ENCODE measurements at regions of chr4 and their contacts with region 1.

Region 1: DNA sequence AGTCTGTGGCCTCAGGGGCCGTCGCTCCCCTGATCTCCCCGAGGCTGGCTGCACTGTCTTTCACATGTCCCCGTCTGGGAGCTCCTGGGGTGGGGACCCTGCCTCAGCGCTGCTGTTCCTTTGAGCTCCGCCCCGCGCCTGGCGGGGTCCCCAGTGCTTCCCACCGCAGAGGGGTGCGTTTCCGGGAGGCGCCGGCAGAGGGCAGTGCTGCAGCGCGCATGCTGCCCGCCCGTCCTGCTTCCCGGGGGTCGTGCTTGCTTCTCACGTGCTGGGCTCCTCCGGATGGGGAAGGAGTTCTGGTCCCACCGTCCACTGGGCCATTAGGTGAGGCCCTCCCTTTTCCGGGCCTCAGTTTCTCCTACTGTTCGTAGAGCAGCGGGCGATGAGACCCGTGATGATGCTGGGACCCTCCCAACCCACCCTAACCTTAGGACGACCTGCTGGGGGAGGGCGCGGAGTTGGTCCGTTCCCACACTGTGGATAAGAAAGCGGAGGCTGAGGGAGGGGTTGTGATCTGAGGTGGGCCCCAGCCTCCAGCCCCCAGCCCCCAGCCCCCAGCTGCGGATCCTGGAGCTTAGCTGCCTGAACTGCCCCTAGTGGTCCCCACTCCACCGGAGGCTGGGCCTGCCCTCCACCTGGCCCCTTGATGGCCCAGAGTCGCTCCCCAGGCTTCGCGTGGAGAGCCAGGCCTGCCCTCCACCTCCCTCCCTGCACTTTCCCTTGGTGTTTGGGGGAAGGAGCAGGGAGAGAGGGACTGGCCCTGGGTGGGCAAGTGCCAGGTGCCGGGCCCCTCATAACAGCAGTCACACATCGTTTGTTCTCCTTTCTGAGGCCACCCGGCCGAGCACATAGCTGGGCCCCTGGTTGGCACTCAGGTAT is 15.3 kb downstream of the CPZ start:
- DNase-seq: no peak

Region 2: DNA sequence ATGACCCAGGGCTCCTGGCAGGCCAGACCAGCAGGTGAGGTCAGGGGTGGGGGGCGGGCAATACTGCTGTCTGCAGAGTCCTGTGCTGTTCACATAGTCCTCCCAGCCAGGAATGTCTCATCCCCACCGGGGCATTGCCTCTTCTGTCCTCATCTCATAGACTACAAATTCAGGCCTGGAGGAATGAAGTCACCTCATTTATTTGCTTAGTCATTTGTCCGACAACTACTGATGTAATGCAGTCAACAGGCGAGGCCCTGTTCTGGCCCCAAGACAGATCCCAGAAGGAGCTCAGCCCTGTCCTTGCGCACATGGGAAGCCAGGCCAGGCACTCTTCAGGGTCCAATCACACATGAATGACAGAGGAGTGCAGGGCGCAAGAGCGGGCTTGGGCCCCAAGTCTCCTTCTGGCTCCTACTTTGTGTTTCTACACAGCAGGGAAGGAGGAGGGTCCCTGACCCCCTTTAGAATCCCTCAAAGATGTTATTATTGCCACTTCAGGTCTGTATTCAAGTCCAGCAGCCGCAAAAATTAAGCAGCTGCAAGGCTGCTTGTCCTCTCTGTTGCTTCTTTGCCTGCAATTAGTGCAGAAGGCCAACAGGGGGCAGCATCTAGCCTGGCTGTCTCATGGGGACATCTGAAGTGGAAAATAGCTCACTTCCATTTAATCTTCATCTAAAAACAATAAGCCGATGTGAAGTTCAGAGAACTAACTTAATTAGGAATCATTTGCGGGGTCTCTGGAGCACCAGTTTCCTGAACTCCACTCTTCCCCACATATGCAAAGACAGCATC is 279.0 kb after region 1 on chr4:
- intact Hi-C with region 1: loop called (anchors 10 kb)
- DNase-seq: no peak

Region 3: GRCh38 chr4:8917868-8918783 is 310.3 kb after region 1 on chr4:
- intact Hi-C with region 1: loop called (anchors 10 kb)
- DNase-seq: peak; percentile 78